ENCODE measurements at regions of chr10 and their contacts with region 1.

Region 1: GRCh38 chr10:29430101-29430500 is 141.2 kb downstream of the LYZL1 start:
- DNase-seq: peak; percentile 95
- H3K4me3 ChIP-seq: no peak overlapping the region
- H3K27ac ChIP-seq: peak overlapping the region; percentile 93
- H3K4me1 ChIP-seq: peaks cover 60% of the 10 kb centered on the region
- H3K27me3 ChIP-seq: no peaks in the 10 kb centered on the region
- CTCF ChIP-seq: no peak

Region 2: DNA sequence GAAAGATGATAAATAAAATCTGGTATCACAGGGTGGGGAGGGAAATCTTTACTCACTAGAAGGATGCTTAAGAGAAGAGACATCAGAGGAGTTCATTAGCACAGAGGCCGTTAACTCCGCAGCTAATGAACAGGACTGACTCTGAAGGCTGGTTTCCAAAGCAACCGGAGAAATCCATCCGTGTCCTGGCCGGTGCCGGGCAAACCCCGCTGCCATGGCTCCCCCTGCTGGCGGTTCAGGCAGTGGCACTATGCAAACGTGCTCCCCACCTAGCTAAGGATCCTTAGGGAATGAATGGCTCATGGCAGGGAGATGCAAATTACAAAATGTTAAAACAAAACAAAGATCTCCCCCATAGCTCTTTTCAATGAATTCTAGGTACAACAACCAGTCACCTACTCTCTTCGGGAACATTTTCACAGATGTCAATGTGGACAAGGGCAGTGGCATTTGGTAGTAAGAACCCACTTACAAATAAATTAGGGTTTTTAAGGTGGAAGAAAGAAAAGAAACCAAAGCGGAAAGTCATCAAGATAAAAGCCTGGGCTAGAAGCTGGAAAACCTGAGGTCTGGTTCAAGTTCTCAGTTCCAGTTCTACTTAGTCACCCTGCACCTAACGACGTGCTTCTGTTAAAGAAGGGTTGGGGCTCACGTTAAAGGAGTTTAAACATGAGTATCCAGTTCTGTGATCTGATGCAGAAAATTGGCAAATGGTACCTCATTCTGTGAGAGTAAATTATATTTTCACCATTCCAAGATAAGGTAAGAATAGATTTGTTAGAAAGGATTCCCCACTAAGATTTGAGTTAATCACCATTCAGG is 66.5 kb after region 1 on chr10:
- CTCF ChIA-PET with region 1: interaction called, 12 read pairs
- POLR2A ChIA-PET with region 1: no interaction called
- intact Hi-C with region 1: loop called (anchors 2 kb)
- DNase-seq: peak; percentile 86
- H3K4me3 ChIP-seq: no peak overlapping the region
- H3K27ac ChIP-seq: no peak overlapping the region
- H3K4me1 ChIP-seq: peaks cover 12% of the 10 kb centered on the region
- H3K27me3 ChIP-seq: no peaks in the 10 kb centered on the region
- CTCF ChIP-seq: peak; percentile 98

Region 3: DNA sequence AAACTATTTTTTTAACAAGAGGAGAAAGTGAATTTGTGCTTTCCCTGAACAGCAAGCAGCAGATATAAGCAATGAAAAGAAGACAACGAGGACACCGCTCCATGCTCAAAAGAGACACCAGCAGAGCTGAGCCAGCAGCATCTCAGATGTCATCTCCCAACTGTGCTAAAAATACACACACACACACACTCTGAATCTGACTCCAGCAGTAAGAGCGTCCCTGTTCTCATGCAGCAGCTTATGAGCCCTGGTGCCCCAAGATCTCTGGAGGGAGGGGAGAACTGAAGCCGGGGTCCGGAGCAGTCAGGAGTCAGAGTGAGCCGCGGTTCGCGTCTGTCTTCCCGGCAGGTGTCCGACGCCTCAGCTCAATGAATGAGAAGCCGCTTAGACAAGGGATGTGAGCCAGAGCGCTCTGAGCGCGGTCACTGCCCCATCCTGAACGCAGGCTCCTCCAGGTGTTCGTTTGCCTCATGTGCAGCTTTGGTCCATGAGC is 155.4 kb after region 1 on chr10:
- CTCF ChIA-PET with region 1: interaction called, 11 read pairs
- POLR2A ChIA-PET with region 1: no interaction called
- intact Hi-C with region 1: loop called (anchors 5 kb)
- DNase-seq: peak; percentile 12
- H3K4me3 ChIP-seq: no peak overlapping the region
- H3K27ac ChIP-seq: no peak overlapping the region
- H3K4me1 ChIP-seq: peaks cover 34% of the 10 kb centered on the region
- H3K27me3 ChIP-seq: no peaks in the 10 kb centered on the region
- CTCF ChIP-seq: no peak

Region 4: GRCh38 chr10:29590915-29591650 is 161.0 kb after region 1 on chr10:
- CTCF ChIA-PET with region 1: interaction called, 11 read pairs
- POLR2A ChIA-PET with region 1: no interaction called
- intact Hi-C with region 1: loop called (anchors 5 kb)
- DNase-seq: no peak
- H3K4me3 ChIP-seq: no peak overlapping the region
- H3K27ac ChIP-seq: peak overlapping the region; percentile 85
- H3K4me1 ChIP-seq: peaks cover 40% of the 10 kb centered on the region
- H3K27me3 ChIP-seq: no peaks in the 10 kb centered on the region
- CTCF ChIP-seq: no peak; the same call in 1 of the 2 replicates

Region 5: GRCh38 chr10:30073767-30074060 is 643.6 kb after region 1 on chr10:
- CTCF ChIA-PET with region 1: no interaction called
- POLR2A ChIA-PET with region 1: interaction called, 3 read pairs
- intact Hi-C with region 1: loop called (anchors 2 kb)
- DNase-seq: peak; percentile 92
- H3K4me3 ChIP-seq: no peak overlapping the region
- H3K27ac ChIP-seq: peak overlapping the region; percentile 96
- H3K4me1 ChIP-seq: peaks cover 68% of the 10 kb centered on the region
- H3K27me3 ChIP-seq: no peaks in the 10 kb centered on the region
- CTCF ChIP-seq: no peak